Activated CD4-positive, alpha-beta T cell treated with anti-CD3 and anti-CD28 coated beads for 36 hours (primary cell): ENCODE measurements at regions of chr15 and their contacts with region 1.

Region 1: GRCh38 chr15:75684642-75685041 is 28.0 kb downstream of the CSPG4 start:
- DNase-seq: no peak
- ATAC-seq: no peak
- H3K4me3 Mint-ChIP-seq: no peak overlapping the region
- H3K27ac Mint-ChIP-seq: no peak overlapping the region
- H3K4me1 Mint-ChIP-seq: no peaks in the 10 kb centered on the region
- H3K27me3 Mint-ChIP-seq: peaks cover 2% of the 10 kb centered on the region

Region 2: DNA sequence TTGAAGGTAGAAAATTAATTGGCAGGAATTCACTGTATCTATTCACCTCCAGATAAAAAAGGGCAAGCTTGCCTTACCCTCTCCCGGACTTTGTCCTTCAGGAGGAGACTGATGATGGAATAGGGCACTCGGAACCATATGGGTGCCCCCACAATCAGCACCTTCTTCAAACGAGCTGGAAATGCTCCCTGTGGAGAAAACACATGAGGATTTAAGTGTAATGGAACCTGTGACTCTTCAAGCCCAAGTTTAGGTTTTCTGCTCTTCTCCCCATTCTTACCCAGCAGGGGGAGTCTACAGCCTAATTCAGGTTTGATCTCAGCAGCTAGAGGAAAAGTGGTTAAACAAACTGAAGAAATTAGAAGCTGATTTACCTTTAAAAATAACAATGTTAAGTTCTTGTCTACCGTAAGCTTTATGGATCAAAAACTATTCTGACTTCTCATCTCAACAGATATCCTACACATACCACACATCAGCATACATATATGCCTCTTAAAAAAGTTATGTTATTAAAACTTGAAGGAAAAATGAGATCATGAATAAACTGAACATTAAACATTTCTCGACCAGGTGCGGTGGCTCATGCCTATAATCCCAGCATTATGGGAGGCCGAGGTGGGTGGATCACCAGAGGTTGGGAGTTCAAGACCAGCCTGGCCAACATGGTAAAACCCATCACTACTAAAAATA is 175.7 kb before region 1 on chr15:
- CTCF ChIA-PET with region 1: interaction called, 6 read pairs
- POLR2A ChIA-PET with region 1: no interaction called
- intact Hi-C with region 1: loop called in 1 of 2 experiments (anchors 1 kb)
- DNase-seq: peak; percentile 13
- ATAC-seq: no peak
- H3K4me3 Mint-ChIP-seq: no peak overlapping the region
- H3K27ac Mint-ChIP-seq: no peak overlapping the region
- H3K4me1 Mint-ChIP-seq: no peaks in the 10 kb centered on the region
- H3K27me3 Mint-ChIP-seq: no peaks in the 10 kb centered on the region

Region 3: DNA sequence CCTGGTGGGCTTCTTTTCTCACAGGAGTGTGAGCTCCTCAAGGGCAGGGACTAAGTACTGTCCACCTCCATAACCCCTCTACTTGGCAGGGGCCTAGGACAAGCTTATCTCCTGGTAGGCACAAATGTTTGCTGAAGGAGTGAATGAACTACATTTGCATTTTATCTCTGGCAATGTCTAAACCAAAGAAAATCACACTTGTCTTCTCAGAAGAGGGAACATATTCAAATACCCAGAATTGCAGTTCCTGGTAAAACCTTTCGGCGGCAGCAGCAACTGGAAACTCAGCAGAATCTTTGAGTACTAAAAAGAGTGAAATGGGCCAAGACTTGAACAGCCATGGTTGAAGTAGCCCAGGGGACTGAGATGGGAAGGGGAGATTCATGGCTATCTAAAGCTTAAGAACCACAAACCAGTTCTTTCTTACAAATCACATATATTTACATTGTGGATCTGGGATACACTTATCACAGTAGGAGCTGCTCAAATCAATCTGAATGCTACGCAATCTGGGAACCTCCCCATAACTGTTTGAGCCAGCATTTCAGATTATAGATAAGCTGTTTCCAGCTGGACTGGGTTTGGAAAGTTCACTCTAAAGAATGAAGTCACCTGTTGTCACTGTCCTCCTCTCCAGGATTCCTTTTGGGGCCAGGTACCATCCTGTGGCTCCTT is 86.8 kb before region 1 on chr15:
- CTCF ChIA-PET with region 1: no interaction called
- POLR2A ChIA-PET with region 1: no interaction called
- intact Hi-C with region 1: loop called in 1 of 2 experiments (anchors 5 kb)
- DNase-seq: peak; percentile 64
- ATAC-seq: peak; percentile 75
- H3K4me3 Mint-ChIP-seq: no peak overlapping the region
- H3K27ac Mint-ChIP-seq: peak overlapping the region; percentile 85
- H3K4me1 Mint-ChIP-seq: peaks cover 25% of the 10 kb centered on the region
- H3K27me3 Mint-ChIP-seq: no peaks in the 10 kb centered on the region

Region 4: DNA sequence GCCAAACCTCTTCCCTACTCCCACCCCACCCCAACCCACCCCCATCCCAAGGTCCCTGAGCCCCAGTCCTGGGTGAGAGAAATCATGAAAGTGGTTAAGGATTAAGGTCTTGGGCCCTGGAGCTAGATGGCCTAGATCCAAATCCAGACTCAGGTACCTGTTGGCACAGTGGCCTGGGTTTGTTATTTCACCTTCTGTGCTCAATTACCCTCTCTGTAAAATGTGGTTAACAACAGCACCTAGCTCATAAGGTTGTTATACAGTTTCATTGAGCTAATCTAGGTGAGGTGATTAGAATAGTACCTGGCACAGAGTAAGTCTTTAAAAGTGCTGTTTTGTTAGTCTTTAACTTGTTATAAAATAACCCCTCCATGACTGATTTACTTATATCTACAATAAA is 52.7 kb before region 1 on chr15:
- CTCF ChIA-PET with region 1: no interaction called
- POLR2A ChIA-PET with region 1: no interaction called
- intact Hi-C with region 1: no loop called
- DNase-seq: no peak
- ATAC-seq: no peak
- H3K4me3 Mint-ChIP-seq: no peak overlapping the region
- H3K27ac Mint-ChIP-seq: no peak overlapping the region
- H3K4me1 Mint-ChIP-seq: peaks cover 12% of the 10 kb centered on the region
- H3K27me3 Mint-ChIP-seq: no peaks in the 10 kb centered on the region

Region 5: GRCh38 chr15:75647370-75648155 is 37.1 kb before region 1 on chr15 and contains the start of gene SNX33:
- CTCF ChIA-PET with region 1: interaction called, 5 read pairs
- POLR2A ChIA-PET with region 1: no interaction called
- intact Hi-C with region 1: loop called in 1 of 2 experiments (anchors 5 kb)
- DNase-seq: peak; percentile 78
- ATAC-seq: peak; percentile 65
- H3K4me3 Mint-ChIP-seq: peak within 1 kb of the TSS; percentile 76
- H3K27ac Mint-ChIP-seq: peak within 1 kb of the TSS; percentile 58
- H3K4me1 Mint-ChIP-seq: peaks cover 20% of the 10 kb centered on the region
- H3K27me3 Mint-ChIP-seq: no peaks in the 10 kb centered on the region
- total RNA-seq, gene SNX33: 2.2 to 2.4 TPM

Region 6: DNA sequence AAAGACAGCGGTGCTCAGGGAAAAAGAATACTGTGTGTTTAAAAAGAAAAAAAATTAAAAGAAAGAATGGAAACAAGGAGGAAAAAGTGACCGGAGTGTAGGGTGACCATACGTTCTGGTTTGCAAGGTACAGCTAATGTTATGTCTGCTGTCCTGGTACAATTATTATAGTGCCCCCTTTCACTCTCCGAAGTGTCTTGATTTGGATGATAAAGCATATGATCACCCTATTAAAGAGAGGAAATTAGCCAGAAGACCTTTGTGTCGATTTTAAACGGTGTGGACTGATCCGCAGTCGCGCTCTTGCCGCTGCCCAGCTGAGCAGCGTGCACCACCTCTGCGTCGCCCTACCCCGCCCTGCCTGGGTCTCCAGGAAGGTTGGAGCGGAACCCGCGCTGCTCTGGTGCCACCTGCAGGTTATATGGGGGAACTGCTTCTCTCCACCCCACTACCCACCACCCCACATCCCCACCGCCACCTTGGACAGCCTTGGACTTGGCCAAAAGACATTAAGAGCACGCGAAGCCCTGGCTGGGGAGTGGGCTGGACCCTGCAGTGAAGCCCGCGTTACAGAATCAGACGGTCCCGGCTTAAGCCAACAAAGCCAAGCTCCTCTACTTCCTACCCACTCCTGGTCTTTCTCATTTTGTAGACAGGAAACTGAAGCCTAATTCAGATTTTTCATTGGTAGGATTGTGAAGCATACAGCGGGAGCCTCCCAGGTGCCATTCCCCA is 117.4 kb after region 1 on chr15:
- CTCF ChIA-PET with region 1: interaction called, 6 read pairs
- POLR2A ChIA-PET with region 1: no interaction called
- intact Hi-C with region 1: loop called (anchors 1 kb)
- DNase-seq: peak; percentile 91
- ATAC-seq: peak; percentile 98
- H3K4me3 Mint-ChIP-seq: peak overlapping the region; percentile 22
- H3K27ac Mint-ChIP-seq: no peak overlapping the region
- H3K4me1 Mint-ChIP-seq: peaks cover 3% of the 10 kb centered on the region
- H3K27me3 Mint-ChIP-seq: peaks cover 26% of the 10 kb centered on the region

Region 7: GRCh38 chr15:76065267-76065666 is 380.6 kb after region 1 on chr15:
- CTCF ChIA-PET with region 1: no interaction called
- POLR2A ChIA-PET with region 1: no interaction called
- intact Hi-C with region 1: no loop called
- DNase-seq: peak; percentile 29
- ATAC-seq: peak; percentile 78
- H3K4me3 Mint-ChIP-seq: no peak overlapping the region
- H3K27ac Mint-ChIP-seq: no peak overlapping the region
- H3K4me1 Mint-ChIP-seq: peaks cover 9% of the 10 kb centered on the region
- H3K27me3 Mint-ChIP-seq: peaks cover 45% of the 10 kb centered on the region